Activated CD4-positive, alpha-beta T cell treated with anti-CD3 and anti-CD28 coated beads for 36 hours (primary cell): ENCODE measurements at regions of chr16 and their contacts with region 1.

Region 1: DNA sequence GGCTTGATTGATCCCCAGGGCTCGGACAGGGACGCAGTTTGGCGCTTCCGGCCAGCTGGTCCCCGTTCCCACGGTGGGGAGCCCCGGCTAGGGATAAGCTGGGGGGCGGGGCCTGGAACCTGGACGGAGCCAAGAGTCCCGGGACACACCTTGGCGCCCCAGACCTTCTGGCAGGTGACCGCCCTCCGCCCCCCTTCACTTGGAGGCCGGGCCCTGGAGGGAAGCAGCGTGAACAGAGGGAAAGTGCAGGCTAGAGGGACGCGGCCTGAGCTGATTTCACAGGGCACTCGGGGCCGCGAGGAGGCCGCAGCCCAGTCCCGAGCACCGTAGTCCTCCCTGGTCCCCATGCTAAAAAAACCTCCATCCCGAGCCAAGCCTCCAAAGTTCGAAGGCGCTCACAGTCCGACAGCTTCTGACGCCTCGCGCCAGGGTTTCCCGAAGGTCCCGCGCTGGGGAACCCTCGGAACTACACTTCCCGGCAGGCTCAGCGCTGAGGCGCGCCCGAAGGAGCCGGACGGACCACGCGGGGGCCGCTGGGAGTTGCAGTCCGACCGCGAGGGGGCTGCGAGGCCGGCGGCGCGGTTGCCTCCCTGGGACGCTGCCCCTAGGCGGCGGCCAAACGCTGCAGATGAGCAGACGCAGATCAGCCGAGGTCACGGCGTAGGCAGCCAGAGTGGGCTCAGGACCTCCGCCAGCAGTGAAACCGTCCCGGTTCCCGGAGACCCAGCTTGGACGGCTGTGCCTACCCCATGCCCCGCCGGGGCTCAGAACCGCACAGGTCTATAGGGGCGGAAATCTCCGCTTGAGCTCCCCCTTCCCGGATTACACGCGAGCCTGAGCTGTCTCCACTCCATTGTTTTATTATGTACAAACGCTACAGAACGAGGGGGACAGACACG is at the start of gene TBX6:
- DNase-seq: peak; percentile 97
- ATAC-seq: peak; percentile 83
- H3K4me3 Mint-ChIP-seq: peak within 1 kb of the TSS; percentile 84
- H3K27ac Mint-ChIP-seq: peak within 1 kb of the TSS; percentile 92
- H3K4me1 Mint-ChIP-seq: peaks cover 51% of the 10 kb centered on the region
- H3K27me3 Mint-ChIP-seq: no peaks in the 10 kb centered on the region
- total RNA-seq, gene TBX6: 2.7 to 3.0 TPM

Region 2: DNA sequence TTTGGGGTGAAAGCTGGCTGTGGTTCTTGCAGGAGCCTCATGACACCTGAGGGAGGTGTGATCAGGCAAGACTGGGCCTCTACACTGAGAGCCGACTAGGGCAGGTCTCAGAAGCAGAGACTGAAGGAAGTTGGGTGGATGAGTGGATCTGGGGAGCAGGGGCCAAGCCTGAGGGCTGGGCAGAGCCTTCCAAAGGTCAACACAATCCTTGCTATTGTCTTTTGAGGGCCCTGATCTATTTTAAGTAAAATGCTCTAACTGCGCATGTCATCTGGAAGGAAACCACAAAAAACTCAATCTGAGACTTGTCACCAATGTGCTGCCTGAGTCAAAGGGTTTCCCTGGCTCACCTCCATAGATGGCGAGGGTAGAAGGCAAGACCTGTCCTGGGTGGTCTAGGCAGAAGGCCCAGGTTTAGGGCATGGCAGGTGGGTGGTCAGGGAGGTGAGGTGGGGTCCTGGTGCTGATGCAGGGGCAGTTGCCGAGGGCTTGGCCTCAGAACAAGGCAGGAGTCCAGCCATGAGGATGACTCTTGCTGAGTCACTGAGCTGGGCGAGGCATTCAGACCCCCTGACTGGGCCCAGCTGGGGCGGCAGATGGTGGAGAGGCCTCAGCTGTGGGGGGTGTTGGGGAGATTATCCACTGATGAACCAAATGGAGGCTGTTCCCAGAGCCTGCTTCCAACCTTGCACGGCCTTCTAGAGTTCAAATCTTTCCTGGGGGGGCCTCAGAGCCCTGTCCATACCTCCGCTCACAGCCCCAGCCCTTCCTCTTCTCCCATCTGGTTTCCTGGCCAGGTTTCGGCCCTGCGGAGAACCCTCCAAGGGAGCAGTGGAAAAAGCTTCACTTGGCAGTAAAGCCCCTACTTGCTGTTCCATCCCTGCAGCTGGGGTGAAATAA is 266.3 kb before region 1 on chr16:
- CTCF ChIA-PET with region 1: interaction called, 3 read pairs
- POLR2A ChIA-PET with region 1: no interaction called
- intact Hi-C with region 1: loop called in 1 of 2 experiments (anchors 1 kb)
- DNase-seq: peak; percentile 72
- ATAC-seq: peak; percentile 57
- H3K4me3 Mint-ChIP-seq: peak overlapping the region; percentile 53
- H3K27ac Mint-ChIP-seq: peak overlapping the region; percentile 91
- H3K4me1 Mint-ChIP-seq: peaks cover 78% of the 10 kb centered on the region
- H3K27me3 Mint-ChIP-seq: no peaks in the 10 kb centered on the region

Region 3: DNA sequence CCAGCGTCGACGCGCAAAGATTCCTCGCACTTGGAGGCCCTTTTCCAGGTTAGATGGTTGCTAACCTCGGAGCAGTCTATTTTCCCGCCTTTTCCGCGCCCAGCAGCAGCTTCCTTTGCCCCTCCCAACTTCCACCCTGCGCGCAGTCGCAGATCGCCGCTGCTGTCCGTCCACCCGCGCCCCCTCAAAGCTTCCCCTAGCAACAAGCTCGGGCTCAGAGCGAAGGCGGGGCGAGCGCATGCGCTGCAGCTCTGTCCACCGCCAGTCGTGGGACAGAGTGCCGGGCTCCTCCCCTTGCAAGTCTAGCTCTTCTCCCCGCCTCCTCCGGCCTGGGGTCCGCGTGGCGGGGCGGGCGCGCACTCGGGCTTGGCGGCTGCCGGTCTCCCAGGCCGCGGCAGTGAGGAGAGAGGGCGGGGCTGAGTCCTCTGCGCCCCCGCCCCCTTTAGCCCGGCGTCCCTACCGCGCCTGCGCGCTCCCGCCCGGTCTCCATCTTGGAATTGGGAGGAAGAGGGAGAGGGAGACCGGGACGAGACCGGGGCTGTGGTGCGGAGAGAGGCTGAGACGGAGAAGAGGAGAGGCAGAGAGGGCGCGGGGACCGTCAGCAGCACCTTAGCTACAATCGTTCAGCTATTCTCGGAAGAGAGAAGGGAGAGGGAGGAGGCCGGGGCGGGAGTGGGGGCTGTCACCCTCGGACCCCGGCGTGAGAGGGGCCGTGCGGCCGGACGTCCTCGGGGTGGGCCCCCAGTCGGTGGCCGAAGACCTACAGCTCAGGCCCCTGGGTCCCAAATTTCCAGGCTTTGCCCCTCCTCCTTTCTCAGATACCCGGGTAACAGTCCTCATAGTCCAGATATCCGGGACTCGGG is 118.1 kb before region 1 on chr16 and contains the start of gene TAOK2:
- CTCF ChIA-PET with region 1: interaction called, 3 read pairs
- POLR2A ChIA-PET with region 1: no interaction called
- intact Hi-C with region 1: loop called in 1 of 2 experiments (anchors 1 kb)
- DNase-seq: peak; percentile 98
- ATAC-seq: peak; percentile 98
- H3K4me3 Mint-ChIP-seq: peak within 1 kb of the TSS; percentile 87
- H3K27ac Mint-ChIP-seq: peak within 1 kb of the TSS; percentile 86
- H3K4me1 Mint-ChIP-seq: peaks cover 31% of the 10 kb centered on the region
- H3K27me3 Mint-ChIP-seq: no peaks in the 10 kb centered on the region
- total RNA-seq, gene TAOK2: 24.1 to 24.4 TPM

Region 4: GRCh38 chr16:30075507-30076275 is 16.0 kb before region 1 on chr16 and contains the start of gene PPP4C:
- CTCF ChIA-PET with region 1: interaction called, 14 read pairs
- POLR2A ChIA-PET with region 1: interaction called, 10 read pairs
- intact Hi-C with region 1: loop called (anchors 1 kb)
- DNase-seq: peak; percentile 96
- ATAC-seq: peak; percentile 82
- H3K4me3 Mint-ChIP-seq: peak within 1 kb of the TSS; percentile 89
- H3K27ac Mint-ChIP-seq: peak within 1 kb of the TSS; percentile 91
- H3K4me1 Mint-ChIP-seq: peaks cover 26% of the 10 kb centered on the region
- H3K27me3 Mint-ChIP-seq: no peaks in the 10 kb centered on the region
- total RNA-seq, gene PPP4C: 106 to 113 TPM

Region 5: GRCh38 chr16:30122604-30123160 is 31.0 kb after region 1 on chr16:
- CTCF ChIA-PET with region 1: interaction called, 4 read pairs
- POLR2A ChIA-PET with region 1: no interaction called
- intact Hi-C with region 1: loop called in 1 of 2 experiments (anchors 1 kb)
- DNase-seq: peak; percentile 35
- ATAC-seq: peak; percentile 37
- H3K4me3 Mint-ChIP-seq: peak overlapping the region; percentile 87
- H3K27ac Mint-ChIP-seq: peak overlapping the region; percentile 89
- H3K4me1 Mint-ChIP-seq: peaks cover 17% of the 10 kb centered on the region
- H3K27me3 Mint-ChIP-seq: no peaks in the 10 kb centered on the region

Region 6: GRCh38 chr16:30370444-30371247 is 278.9 kb after region 1 on chr16 and contains the start of gene TBC1D10B:
- CTCF ChIA-PET with region 1: interaction called, 3 read pairs
- POLR2A ChIA-PET with region 1: interaction called, 4 read pairs
- intact Hi-C with region 1: loop called in 1 of 2 experiments (anchors 1 kb)
- DNase-seq: peak; percentile 99
- ATAC-seq: peak; percentile 88
- H3K4me3 Mint-ChIP-seq: peak within 1 kb of the TSS; percentile 89
- H3K27ac Mint-ChIP-seq: peak within 1 kb of the TSS; percentile 97
- H3K4me1 Mint-ChIP-seq: peaks cover 40% of the 10 kb centered on the region
- H3K27me3 Mint-ChIP-seq: no peaks in the 10 kb centered on the region
- total RNA-seq, gene TBC1D10B: 38.1 to 43.4 TPM

Region 7: DNA sequence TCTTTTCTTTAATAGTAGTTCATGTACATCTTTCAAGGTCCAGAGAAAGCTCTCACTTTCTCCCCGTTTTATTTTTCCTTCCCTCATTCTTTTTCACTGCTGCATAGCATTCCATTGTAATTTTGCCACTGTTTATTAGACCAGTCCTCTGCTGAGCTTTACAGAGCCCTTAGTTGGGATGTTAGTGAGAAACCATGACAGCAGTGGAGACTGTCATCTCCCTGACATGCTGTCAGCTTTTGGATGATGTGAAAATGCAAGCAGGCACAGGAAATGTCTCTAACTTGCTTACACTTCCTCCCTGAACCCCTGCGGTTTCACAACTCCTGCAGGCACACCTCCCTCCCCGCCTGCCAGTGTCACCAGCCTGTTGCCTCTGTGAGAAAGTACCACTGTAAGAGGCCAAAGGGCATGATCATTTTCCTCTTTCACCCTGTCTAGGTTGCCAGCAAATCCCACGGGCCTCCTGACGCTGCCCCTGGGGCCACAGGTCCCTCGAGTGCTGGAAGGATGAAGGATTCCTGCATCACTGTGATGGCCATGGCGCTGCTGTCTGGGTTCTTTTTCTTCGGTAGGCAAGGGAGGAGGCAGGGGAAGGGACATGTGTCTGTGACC is 380.7 kb after region 1 on chr16 and contains the start of gene ITGAL:
- CTCF ChIA-PET with region 1: no interaction called
- POLR2A ChIA-PET with region 1: no interaction called
- intact Hi-C with region 1: loop called in 1 of 2 experiments (anchors 5 kb)
- DNase-seq: peak; percentile 93
- ATAC-seq: peak; percentile 62
- H3K4me3 Mint-ChIP-seq: peak within 1 kb of the TSS; percentile 95
- H3K27ac Mint-ChIP-seq: peak within 1 kb of the TSS; percentile 99
- H3K4me1 Mint-ChIP-seq: peaks cover 63% of the 10 kb centered on the region
- H3K27me3 Mint-ChIP-seq: no peaks in the 10 kb centered on the region
- total RNA-seq, gene ITGAL: 210 to 222 TPM

Region 8: DNA sequence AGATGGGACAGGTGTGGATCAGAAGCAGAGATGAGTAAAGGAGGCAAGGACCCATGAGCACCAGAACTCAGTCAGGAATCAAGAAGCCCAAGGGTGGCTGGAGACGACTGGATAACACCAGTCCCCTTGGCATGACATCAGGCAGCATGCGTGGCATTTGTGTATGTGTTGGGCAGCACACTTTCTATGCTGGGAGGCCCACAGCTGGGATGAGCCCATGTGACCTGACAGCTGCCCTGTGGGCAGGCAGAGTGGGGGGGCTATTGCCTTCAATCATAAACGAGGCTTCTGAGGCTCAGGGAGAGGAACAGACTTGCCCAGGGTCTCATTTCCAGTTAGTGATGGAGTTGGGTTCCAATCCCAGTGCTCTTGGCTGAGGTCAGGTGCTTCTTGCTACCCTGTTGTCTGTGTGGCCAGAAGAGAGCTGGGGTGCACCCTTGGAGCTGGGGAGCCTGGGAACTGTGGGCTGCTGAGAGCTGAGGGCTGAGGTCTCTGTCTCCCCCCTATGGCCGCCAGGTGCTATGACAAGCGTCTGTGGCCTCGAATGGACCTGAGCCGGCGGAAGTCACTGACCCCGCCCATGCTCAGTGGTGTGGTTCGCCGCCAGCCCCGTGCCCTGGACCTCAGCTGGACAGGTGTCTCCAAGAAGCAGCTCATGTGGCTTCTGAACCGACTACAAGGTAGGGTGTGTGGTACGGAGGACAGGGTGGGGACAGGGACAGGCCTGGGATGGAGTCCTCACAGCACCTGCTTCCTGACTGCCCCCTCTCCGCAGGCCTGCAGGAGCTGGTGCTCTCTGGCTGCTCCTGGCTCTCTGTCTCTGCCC is 850.1 kb after region 1 on chr16:
- CTCF ChIA-PET with region 1: no interaction called
- POLR2A ChIA-PET with region 1: no interaction called
- intact Hi-C with region 1: no loop called
- DNase-seq: peak; percentile 83
- ATAC-seq: peak; percentile 94
- H3K4me3 Mint-ChIP-seq: peak overlapping the region; percentile 35
- H3K27ac Mint-ChIP-seq: peak overlapping the region; percentile 78
- H3K4me1 Mint-ChIP-seq: peaks cover 19% of the 10 kb centered on the region
- H3K27me3 Mint-ChIP-seq: no peaks in the 10 kb centered on the region